Heart right ventricle (tissue), 16 donors: ENCODE measurements at regions of chr15 and their contacts with region 1.

Region 1: DNA sequence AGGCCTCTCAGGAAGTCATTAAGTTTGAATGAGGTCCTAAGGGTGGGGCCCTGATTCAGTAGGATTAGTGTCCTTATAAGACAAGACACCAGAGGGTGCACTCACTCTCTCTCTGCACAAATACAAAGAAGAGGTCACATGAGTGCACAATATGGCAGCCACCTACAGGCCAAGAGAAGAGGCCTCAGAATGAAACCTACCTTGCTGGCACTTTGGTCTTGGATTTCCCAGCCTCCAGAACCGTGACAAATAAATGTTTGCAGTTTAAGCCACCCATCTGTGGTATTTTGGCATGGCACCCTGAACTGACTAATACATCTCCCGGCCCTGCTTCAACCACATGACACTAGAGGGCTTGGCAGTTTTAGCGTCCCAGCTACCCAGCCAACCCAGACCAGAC is 73.9 kb upstream of the CHRNB4 start:
- DNase-seq: no peak
- ATAC-seq: no peak
- H3K4me3 ChIP-seq: no peak overlapping the region
- H3K27ac ChIP-seq: no peak overlapping the region
- H3K4me1 ChIP-seq: no peaks in the 10 kb centered on the region
- H3K27me3 ChIP-seq: peaks cover 0 to 22% (median 2%) of the 10 kb centered on the region in 7 donors
- CTCF ChIP-seq: no peak

Region 2: GRCh38 chr15:78625606-78626280 is 89.1 kb before region 1 on chr15:
- intact Hi-C with region 1: loop called in 1 of 10 experiments (anchors 5 kb)
- DNase-seq: no peak
- ATAC-seq: no peak
- H3K4me3 ChIP-seq: no peak overlapping the region
- H3K27ac ChIP-seq: no peak overlapping the region
- H3K4me1 ChIP-seq: peaks cover 0 to 6% (median 4%) of the 10 kb centered on the region in 9 donors
- H3K27me3 ChIP-seq: peaks cover 7 to 70% (median 59%) of the 10 kb centered on the region in 7 donors
- CTCF ChIP-seq: no peak

Region 3: GRCh38 chr15:78893538-78893937 is 178.6 kb after region 1 on chr15:
- intact Hi-C with region 1: no loop called
- DNase-seq: no peak
- ATAC-seq: no peak
- H3K4me3 ChIP-seq: no peak overlapping the region
- H3K27ac ChIP-seq: no peak overlapping the region
- H3K4me1 ChIP-seq: peaks cover 0 to 3% (median 0%) of the 10 kb centered on the region in 9 donors
- H3K27me3 ChIP-seq: no peaks in the 10 kb centered on the region
- CTCF ChIP-seq: no peak